ENCODE measurements at regions of chr16 and their contacts with region 1.

Region 1: DNA sequence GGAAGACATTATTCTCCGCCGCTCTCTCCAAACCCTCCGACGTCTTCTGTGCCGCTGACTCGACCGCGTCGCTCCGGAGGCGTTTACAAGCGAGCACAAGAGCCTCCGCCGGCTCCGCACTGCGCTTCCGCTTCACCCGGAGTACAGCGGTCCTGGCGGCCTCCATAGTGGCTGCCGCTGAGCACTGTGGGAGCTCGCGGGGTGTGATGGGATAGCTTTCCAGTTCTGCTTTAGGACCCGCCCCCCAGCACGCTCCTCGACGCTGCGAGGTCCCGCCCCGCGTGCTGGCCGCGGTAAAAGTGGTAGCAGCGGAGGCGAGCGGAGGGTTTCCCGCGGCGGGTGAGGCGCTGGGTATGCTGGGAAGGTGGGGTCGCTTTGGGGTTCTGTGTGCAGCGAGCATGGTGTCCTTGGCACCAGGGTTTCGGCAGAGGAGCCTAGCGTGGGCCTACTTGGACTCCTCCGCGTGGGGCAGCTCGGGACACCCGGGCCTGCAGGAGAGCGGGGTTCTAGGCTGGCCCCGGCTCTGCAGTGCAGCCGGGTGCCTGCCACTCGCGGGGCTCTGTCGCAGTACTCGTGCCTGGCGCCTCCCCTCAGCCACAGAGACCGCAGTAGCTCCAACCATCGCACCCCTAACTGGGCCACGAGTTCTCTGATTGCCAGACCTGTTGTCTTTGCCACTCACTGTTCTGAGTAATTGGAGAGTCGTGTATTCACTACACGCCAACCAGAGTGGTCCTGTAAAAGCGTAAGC is at the starts of genes PRMT7 and SLC7A6OS:
- DNase-seq: peak; percentile 77 to 96 (median 92)
- ATAC-seq: peak; percentile 97
- H3K4me3 ChIP-seq: peak within 1 kb of the TSS; percentile 84 to 92
- H3K4me3 Mint-ChIP-seq: peak within 1 kb of the TSS; percentile 97
- H3K27ac ChIP-seq: peak within 1 kb of the TSS; percentile 70 to 81
- H3K27ac Mint-ChIP-seq: peak within 1 kb of the TSS; percentile 98
- H3K4me1 ChIP-seq: peaks cover 46% of the 10 kb centered on the region
- H3K4me1 Mint-ChIP-seq: peaks cover 62% of the 10 kb centered on the region
- H3K27me3 ChIP-seq: no peaks in the 10 kb centered on the region
- H3K27me3 Mint-ChIP-seq: no peaks in the 10 kb centered on the region
- CTCF ChIP-seq: peak; percentile 8
- total RNA-seq, gene PRMT7: 53.8 to 58.7 TPM
- total RNA-seq, gene SLC7A6OS: 39.4 to 44.2 TPM

Region 2: GRCh38 chr16:68206245-68206644 is 104.7 kb before region 1 on chr16:
- CTCF ChIA-PET with region 1: no interaction called
- POLR2A ChIA-PET with region 1: no interaction called
- intact Hi-C with region 1: no loop called
- DNase-seq: no peak
- ATAC-seq: no peak
- H3K4me3 ChIP-seq: no peak overlapping the region
- H3K4me3 Mint-ChIP-seq: no peak overlapping the region
- H3K27ac ChIP-seq: no peak overlapping the region
- H3K27ac Mint-ChIP-seq: peak overlapping the region; percentile 25
- H3K4me1 ChIP-seq: peaks cover 21% of the 10 kb centered on the region
- H3K4me1 Mint-ChIP-seq: peaks cover 37% of the 10 kb centered on the region
- H3K27me3 ChIP-seq: no peaks in the 10 kb centered on the region
- H3K27me3 Mint-ChIP-seq: no peaks in the 10 kb centered on the region
- CTCF ChIP-seq: no peak

Region 3: DNA sequence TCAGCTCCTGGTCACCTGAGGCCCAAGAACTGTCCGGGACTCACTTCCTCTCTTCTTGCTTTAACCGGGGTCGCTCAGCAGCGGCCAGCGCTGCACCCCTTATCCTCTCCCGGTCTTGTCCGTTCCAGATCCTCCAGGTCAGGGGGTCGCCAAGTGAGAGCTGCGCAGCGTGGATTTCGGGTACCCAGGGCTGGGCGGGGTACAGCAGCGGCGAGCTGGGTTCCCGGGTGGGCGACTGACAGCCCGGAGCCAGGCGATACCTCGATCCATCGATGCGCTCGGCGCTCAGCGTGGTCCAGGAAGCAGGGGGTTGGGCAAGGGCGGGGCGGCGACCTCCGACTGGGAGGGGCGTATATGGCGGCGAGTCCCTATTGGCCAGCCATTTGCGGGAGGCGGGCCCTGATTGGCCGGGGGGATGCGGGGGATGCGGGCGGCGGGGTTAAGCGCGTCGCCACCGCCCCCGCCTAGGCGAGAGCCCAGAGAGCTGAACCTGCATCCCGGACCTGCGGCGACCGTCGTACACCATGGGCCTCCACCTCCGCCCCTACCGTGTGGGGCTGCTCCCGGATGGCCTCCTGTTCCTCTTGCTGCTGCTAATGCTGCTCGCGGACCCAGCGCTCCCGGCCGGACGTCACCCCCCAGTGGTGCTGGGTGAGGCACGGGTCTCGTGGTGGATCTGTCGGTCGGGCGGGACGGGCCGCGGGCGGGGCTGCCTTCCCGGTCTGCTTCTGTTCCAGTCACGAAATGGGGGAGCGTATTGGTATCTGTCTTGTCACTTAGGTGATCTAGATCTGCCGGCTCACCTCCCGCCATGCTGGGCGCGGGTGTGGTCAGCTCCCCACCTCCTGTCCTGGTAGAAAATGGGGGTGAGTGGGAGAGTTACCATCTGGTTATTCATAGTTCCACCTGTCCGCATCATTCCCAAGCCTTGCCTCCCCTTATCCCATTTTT is 65.8 kb before region 1 on chr16 and contains the start of gene PLA2G15:
- CTCF ChIA-PET with region 1: interaction called, 3 read pairs
- POLR2A ChIA-PET with region 1: interaction called, 10 read pairs
- intact Hi-C with region 1: loop called in 1 of 2 experiments (anchors 1 kb)
- DNase-seq: peak; percentile 94 to 98 (median 96)
- ATAC-seq: peak; percentile 99
- H3K4me3 ChIP-seq: peak within 1 kb of the TSS; percentile 88 to 91
- H3K4me3 Mint-ChIP-seq: peak within 1 kb of the TSS; percentile 98
- H3K27ac ChIP-seq: peak within 1 kb of the TSS in 1 of 2 experiments; percentile 38
- H3K27ac Mint-ChIP-seq: peak within 1 kb of the TSS; percentile 79
- H3K4me1 ChIP-seq: peaks cover 21% of the 10 kb centered on the region
- H3K4me1 Mint-ChIP-seq: peaks cover 26% of the 10 kb centered on the region
- H3K27me3 ChIP-seq: no peaks in the 10 kb centered on the region
- H3K27me3 Mint-ChIP-seq: no peaks in the 10 kb centered on the region
- CTCF ChIP-seq: no peak
- total RNA-seq, gene PLA2G15: 5.1 to 6.0 TPM

Region 4: GRCh38 chr16:68281368-68282063 is 29.4 kb before region 1 on chr16:
- CTCF ChIA-PET with region 1: interaction called, 11 read pairs
- POLR2A ChIA-PET with region 1: interaction called, 33 read pairs
- intact Hi-C with region 1: loop called in 1 of 2 experiments (anchors 1 kb)
- DNase-seq: peak in 6 of 9 experiments; percentile 25 to 64 (median 40)
- ATAC-seq: peak; percentile 51
- H3K4me3 ChIP-seq: peak overlapping the region in 1 of 2 experiments; percentile 5
- H3K4me3 Mint-ChIP-seq: peak overlapping the region; percentile 66
- H3K27ac ChIP-seq: peak overlapping the region; percentile 1 to 33
- H3K27ac Mint-ChIP-seq: peak overlapping the region; percentile 88
- H3K4me1 ChIP-seq: peaks cover 79% of the 10 kb centered on the region
- H3K4me1 Mint-ChIP-seq: peaks cover 72% of the 10 kb centered on the region
- H3K27me3 ChIP-seq: no peaks in the 10 kb centered on the region
- H3K27me3 Mint-ChIP-seq: no peaks in the 10 kb centered on the region
- CTCF ChIP-seq: no peak

Region 5: GRCh38 chr16:68298907-68299561 is 11.9 kb before region 1 on chr16:
- CTCF ChIA-PET with region 1: interaction called, 20 read pairs
- POLR2A ChIA-PET with region 1: interaction called, 9 read pairs
- intact Hi-C with region 1: no loop called
- DNase-seq: no peak
- ATAC-seq: no peak
- H3K4me3 ChIP-seq: no peak overlapping the region
- H3K4me3 Mint-ChIP-seq: no peak overlapping the region
- H3K27ac ChIP-seq: no peak overlapping the region
- H3K27ac Mint-ChIP-seq: peak overlapping the region; percentile 55
- H3K4me1 ChIP-seq: no peaks in the 10 kb centered on the region
- H3K4me1 Mint-ChIP-seq: peaks cover 29% of the 10 kb centered on the region
- H3K27me3 ChIP-seq: no peaks in the 10 kb centered on the region
- H3K27me3 Mint-ChIP-seq: no peaks in the 10 kb centered on the region
- CTCF ChIP-seq: no peak

Region 6: GRCh38 chr16:68448360-68448970 is 137.5 kb after region 1 on chr16 and contains the start of gene SMPD3:
- CTCF ChIA-PET with region 1: no interaction called
- POLR2A ChIA-PET with region 1: no interaction called
- intact Hi-C with region 1: loop called in 1 of 2 experiments (anchors 1 kb)
- DNase-seq: peak; percentile 96 to 99 (median 98)
- ATAC-seq: peak; percentile 98
- H3K4me3 ChIP-seq: peak within 1 kb of the TSS; percentile 46 to 49
- H3K4me3 Mint-ChIP-seq: peak within 1 kb of the TSS; percentile 68
- H3K27ac ChIP-seq: peak within 1 kb of the TSS in 1 of 2 experiments; percentile 37
- H3K27ac Mint-ChIP-seq: no peak within 1 kb of the TSS
- H3K4me1 ChIP-seq: peaks cover 26% of the 10 kb centered on the region
- H3K4me1 Mint-ChIP-seq: peaks cover 21% of the 10 kb centered on the region
- H3K27me3 ChIP-seq: peaks cover 18 to 25% of the 10 kb centered on the region in 2 experiments
- H3K27me3 Mint-ChIP-seq: peaks cover 24% of the 10 kb centered on the region
- CTCF ChIP-seq: no peak
- total RNA-seq, gene SMPD3: 0.24 to 0.25 TPM

Region 7: GRCh38 chr16:68599586-68599985 is 288.6 kb after region 1 on chr16:
- CTCF ChIA-PET with region 1: no interaction called
- POLR2A ChIA-PET with region 1: no interaction called
- intact Hi-C with region 1: no loop called
- DNase-seq: no peak
- ATAC-seq: no peak
- H3K4me3 ChIP-seq: no peak overlapping the region
- H3K4me3 Mint-ChIP-seq: no peak overlapping the region
- H3K27ac ChIP-seq: no peak overlapping the region
- H3K27ac Mint-ChIP-seq: no peak overlapping the region
- H3K4me1 ChIP-seq: no peaks in the 10 kb centered on the region
- H3K4me1 Mint-ChIP-seq: no peaks in the 10 kb centered on the region
- H3K27me3 ChIP-seq: no peaks in the 10 kb centered on the region
- H3K27me3 Mint-ChIP-seq: no peaks in the 10 kb centered on the region
- CTCF ChIP-seq: no peak

Measured in CD8-positive, alpha-beta T cell (primary cell).